ENCODE measurements at regions of chr11 and their contacts with region 1.

Region 1: GRCh38 chr11:121292495-121293287 is at the start of gene SC5D:
- DNase-seq: peak; percentile 88 to 98 (median 94)
- ATAC-seq: peak; percentile 82
- H3K4me3 ChIP-seq: peak within 1 kb of the TSS; percentile 84
- H3K4me3 Mint-ChIP-seq: peak within 1 kb of the TSS; percentile 92
- H3K27ac ChIP-seq: peak within 1 kb of the TSS; percentile 93 to 96
- H3K27ac Mint-ChIP-seq: peak within 1 kb of the TSS; percentile 99
- H3K4me1 ChIP-seq: peaks cover 12% of the 10 kb centered on the region
- H3K4me1 Mint-ChIP-seq: peaks cover 67% of the 10 kb centered on the region
- H3K27me3 ChIP-seq: no peaks in the 10 kb centered on the region
- H3K27me3 Mint-ChIP-seq: no peaks in the 10 kb centered on the region
- CTCF ChIP-seq: no peak
- total RNA-seq, gene SC5D: 87.7 to 92.7 TPM

Region 2: DNA sequence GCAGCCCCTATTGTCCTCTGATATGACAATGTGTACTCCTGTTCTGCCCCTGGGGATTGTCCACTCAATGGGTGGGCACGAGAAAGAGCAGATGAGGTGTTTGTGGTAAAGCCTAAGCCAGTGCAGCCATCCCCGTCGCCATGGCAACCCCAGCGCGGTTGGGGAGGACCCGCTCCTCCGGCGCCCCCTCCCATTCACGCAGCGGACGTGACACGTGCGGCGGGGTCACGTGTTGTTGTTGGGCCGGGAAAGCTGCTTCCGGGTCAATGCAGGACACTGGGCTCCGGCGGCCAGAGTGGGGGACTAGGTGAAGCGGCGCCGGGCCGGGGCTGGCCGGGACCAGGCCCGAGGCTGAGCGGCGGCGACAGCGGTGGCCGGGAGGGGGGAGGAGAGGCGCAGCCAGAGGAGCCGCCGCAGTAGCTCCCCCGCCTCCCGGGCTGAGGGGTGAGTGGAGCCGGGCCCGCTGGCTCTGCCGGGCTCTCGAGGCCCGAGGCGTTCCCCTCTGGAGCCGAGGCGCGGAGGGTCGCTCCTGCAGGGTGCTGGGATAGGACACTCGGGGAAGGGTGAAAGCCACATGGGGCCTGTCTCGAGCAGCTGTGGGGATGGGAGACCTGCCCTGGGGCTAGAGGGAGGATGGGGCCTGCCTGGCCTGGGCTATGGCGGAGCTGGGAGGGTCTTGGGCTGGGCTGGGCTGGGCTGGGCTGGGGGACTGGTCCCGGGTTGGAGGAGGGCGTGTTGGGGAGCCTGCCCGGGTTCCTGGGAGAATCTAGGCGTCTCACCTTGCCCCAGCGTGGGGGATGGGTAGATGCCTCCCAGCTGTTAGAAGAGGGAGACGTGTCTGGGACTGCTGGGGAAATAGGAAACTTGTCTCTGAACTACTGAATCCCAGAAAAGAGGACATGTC is 268.6 kb before region 1 on chr11 and contains the start of gene TBCEL:
- CTCF ChIA-PET with region 1: no interaction called
- POLR2A ChIA-PET with region 1: no interaction called
- intact Hi-C with region 1: loop called in 1 of 2 experiments (anchors 10 kb)
- DNase-seq: peak; percentile 73 to 90 (median 83)
- ATAC-seq: peak; percentile 85
- H3K4me3 ChIP-seq: peak within 1 kb of the TSS; percentile 70
- H3K4me3 Mint-ChIP-seq: peak within 1 kb of the TSS; percentile 94
- H3K27ac ChIP-seq: peak within 1 kb of the TSS in 1 of 2 donors; percentile 14
- H3K27ac Mint-ChIP-seq: peak within 1 kb of the TSS; percentile 45
- H3K4me1 ChIP-seq: peaks cover 19% of the 10 kb centered on the region
- H3K4me1 Mint-ChIP-seq: peaks cover 44% of the 10 kb centered on the region
- H3K27me3 ChIP-seq: no peaks in the 10 kb centered on the region
- H3K27me3 Mint-ChIP-seq: peaks cover 13% of the 10 kb centered on the region
- CTCF ChIP-seq: no peak
- total RNA-seq, gene TBCEL: 19.4 to 20.3 TPM

Region 3: GRCh38 chr11:121249039-121249663 is 43.5 kb before region 1 on chr11:
- CTCF ChIA-PET with region 1: no interaction called
- POLR2A ChIA-PET with region 1: interaction called, 10 read pairs
- intact Hi-C with region 1: loop called (anchors 1 to 2 kb)
- DNase-seq: peak in 4 of 14 experiments; percentile 5 to 63 (median 52)
- ATAC-seq: peak; percentile 78
- H3K4me3 ChIP-seq: no peak overlapping the region
- H3K4me3 Mint-ChIP-seq: no peak overlapping the region
- H3K27ac ChIP-seq: no peak overlapping the region
- H3K27ac Mint-ChIP-seq: no peak overlapping the region
- H3K4me1 ChIP-seq: no peaks in the 10 kb centered on the region
- H3K4me1 Mint-ChIP-seq: peaks cover 5% of the 10 kb centered on the region
- H3K27me3 ChIP-seq: no peaks in the 10 kb centered on the region
- H3K27me3 Mint-ChIP-seq: no peaks in the 10 kb centered on the region
- CTCF ChIP-seq: peak; percentile 77

Region 4: GRCh38 chr11:121950160-121950559 is 657.5 kb after region 1 on chr11:
- CTCF ChIA-PET with region 1: no interaction called
- POLR2A ChIA-PET with region 1: no interaction called
- intact Hi-C with region 1: no loop called
- DNase-seq: no peak
- ATAC-seq: no peak
- H3K4me3 ChIP-seq: no peak overlapping the region
- H3K4me3 Mint-ChIP-seq: no peak overlapping the region
- H3K27ac ChIP-seq: no peak overlapping the region
- H3K27ac Mint-ChIP-seq: no peak overlapping the region
- H3K4me1 ChIP-seq: no peaks in the 10 kb centered on the region
- H3K4me1 Mint-ChIP-seq: no peaks in the 10 kb centered on the region
- H3K27me3 ChIP-seq: no peaks in the 10 kb centered on the region
- H3K27me3 Mint-ChIP-seq: peaks cover 22% of the 10 kb centered on the region
- CTCF ChIP-seq: no peak

Measured in CD4-positive, alpha-beta T cell (primary cell).